ENCODE measurements at regions of chr1 and their contacts with region 1.

Region 1: DNA sequence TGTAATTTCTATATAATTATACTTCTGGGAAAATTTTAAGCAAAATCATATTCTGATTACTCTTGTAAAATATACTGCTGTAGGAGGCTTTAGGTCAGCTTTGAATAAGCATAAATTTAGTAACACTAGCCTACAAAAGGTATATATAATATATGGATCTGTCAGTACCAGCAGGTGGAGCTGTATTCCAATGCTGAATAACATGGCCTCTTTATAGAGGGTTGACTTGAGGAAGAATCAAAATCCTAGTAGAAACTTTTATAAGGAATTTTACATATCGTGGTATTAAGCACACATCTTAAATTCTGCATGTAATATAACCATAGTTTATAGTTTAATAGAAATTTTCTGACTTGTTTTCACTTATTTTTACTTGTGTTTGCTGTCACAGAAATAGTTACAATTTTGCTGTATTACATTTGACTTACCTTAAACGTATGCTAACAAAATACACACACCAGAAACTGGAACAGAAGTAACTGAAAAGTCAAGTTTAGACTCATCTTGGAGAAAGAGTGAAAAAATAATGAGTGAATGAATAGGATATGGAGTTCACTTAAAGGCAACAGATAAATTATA is 79.3 kb downstream of the HMCN1 start:
- DNase-seq: peak; percentile 52
- H3K4me3 ChIP-seq: no peak overlapping the region
- H3K27ac ChIP-seq: no peak overlapping the region
- H3K4me1 ChIP-seq: no peaks in the 10 kb centered on the region
- CTCF ChIP-seq: peak; percentile 82

Region 2: GRCh38 chr1:186295980-186296379 is 482.5 kb after region 1 on chr1:
- CTCF ChIA-PET with region 1: no interaction called
- POLR2A ChIA-PET with region 1: no interaction called
- intact Hi-C with region 1: loop called (anchors 5 kb)
- DNase-seq: no peak
- H3K4me3 ChIP-seq: no peak within 1 kb of the TSS
- H3K27ac ChIP-seq: no peak within 1 kb of the TSS
- H3K4me1 ChIP-seq: no peaks in the 10 kb centered on the region
- CTCF ChIP-seq: no peak

Measured in OCI-LY7 (cell line).